ENCODE measurements at regions of chr7 and their contacts with region 1.

Region 1: DNA sequence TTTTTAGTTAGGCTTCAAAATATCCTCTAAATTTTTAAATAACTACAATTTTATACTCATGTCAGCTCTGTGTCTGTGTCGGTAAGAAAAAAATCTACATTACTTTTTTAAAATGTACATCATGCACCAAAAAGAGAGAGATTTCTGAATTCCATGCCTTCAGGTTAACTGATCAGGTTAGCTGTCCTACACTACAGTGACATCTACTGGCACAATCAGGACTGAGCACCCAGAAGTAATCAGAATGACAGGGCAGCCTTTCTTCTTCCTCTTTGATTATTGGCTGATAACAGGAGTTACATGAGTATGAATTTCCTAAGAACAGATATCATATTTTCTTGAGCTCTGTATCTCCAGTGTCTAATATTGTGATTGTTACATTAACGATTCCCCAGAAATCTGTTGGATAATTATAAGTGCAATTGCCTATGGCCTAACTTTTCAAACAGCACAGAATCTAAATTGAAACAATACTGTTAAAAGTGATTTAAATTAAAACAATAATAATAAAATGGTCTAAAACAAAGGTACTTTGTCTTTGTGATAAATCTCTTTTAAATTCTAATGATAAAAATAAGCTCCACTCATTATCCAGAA is 41.8 kb upstream of the HYCC1 start:
- DNase-seq: peak; percentile 46
- H3K4me3 Mint-ChIP-seq: no peak overlapping the region
- H3K27ac Mint-ChIP-seq: no peak overlapping the region
- H3K4me1 Mint-ChIP-seq: peaks cover 10% of the 10 kb centered on the region
- H3K27me3 Mint-ChIP-seq: peaks cover 3% of the 10 kb centered on the region

Region 2: GRCh38 chr7:22238354-22239311 is 817.0 kb before region 1 on chr7:
- intact Hi-C with region 1: no loop called
- DNase-seq: no peak
- H3K4me3 Mint-ChIP-seq: no peak overlapping the region
- H3K27ac Mint-ChIP-seq: no peak overlapping the region
- H3K4me1 Mint-ChIP-seq: no peaks in the 10 kb centered on the region
- H3K27me3 Mint-ChIP-seq: peaks cover 14% of the 10 kb centered on the region

Region 3: DNA sequence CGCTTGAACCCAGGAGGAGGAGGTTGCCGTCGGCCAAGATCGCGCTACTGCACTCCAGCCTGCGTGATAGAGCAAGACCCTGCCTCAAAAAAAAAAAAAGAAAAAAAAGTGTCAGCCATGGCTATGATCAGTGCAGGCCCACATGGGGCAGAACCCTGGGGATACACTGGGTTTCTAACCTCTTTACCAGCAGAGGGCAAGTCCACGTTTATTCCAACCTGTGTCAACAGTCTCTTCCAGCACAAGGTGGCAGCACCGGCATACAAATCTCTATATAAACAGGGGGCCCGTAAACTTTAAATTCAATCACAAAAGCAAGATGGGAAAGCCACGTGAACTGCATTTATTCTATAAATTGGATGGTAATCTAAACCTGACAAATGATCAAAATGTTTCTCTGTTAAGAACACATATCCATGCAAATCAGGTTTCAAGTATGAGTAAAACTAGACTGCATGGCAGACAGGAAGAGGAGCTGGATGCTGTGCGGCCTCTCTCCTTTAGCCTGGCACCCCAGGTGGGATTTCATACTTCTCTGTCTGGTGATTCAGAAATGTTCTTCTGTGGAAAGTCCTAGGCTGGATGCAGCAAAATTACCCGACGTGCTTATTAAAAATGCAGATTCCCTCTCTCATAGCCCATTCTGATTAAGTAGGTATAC is 495.7 kb before region 1 on chr7:
- intact Hi-C with region 1: loop called (anchors 1 kb)
- DNase-seq: peak; percentile 62
- H3K4me3 Mint-ChIP-seq: no peak overlapping the region
- H3K27ac Mint-ChIP-seq: no peak overlapping the region
- H3K4me1 Mint-ChIP-seq: peaks cover 44% of the 10 kb centered on the region
- H3K27me3 Mint-ChIP-seq: peaks cover 18% of the 10 kb centered on the region

Region 4: DNA sequence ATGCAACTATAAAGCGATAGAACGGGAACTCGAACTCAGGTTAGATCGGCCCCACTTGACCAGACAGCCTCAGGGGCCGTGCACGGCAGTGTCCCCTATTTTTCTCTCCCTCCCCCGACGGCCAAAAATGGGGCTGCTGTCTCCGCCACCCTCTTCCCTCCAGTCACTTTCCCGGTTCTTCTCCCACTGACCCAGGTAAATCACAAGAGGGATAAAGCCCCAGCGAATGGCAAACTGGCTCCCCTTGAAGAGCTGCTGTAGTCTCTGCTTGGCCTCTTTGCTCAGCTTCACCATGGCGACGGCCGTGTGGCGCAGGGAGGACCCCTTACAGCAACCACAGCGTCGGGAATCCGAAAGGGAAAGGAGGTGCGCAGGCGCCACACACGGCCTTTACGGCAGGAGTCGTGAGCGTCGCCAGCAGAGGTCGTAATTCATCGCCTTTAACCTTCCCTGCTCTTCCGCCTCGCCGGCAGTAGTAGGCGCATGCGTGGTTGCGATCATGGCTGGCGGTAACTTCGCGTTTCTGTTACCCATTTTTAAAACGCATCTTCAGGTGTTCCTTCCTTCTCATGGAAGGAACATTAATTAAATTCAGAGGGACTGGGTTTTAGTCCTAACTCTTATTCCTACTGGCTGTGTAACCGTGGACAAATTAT is 233.1 kb before region 1 on chr7 and contains the start of gene TOMM7:
- intact Hi-C with region 1: loop called (anchors 2 kb)
- DNase-seq: peak; percentile 84
- H3K4me3 Mint-ChIP-seq: peak within 1 kb of the TSS; percentile 97
- H3K27ac Mint-ChIP-seq: peak within 1 kb of the TSS; percentile 93
- H3K4me1 Mint-ChIP-seq: peaks cover 31% of the 10 kb centered on the region
- H3K27me3 Mint-ChIP-seq: peaks cover 14% of the 10 kb centered on the region
- total RNA-seq, gene TOMM7: 216 and 221 TPM in 2 replicates

Region 5: DNA sequence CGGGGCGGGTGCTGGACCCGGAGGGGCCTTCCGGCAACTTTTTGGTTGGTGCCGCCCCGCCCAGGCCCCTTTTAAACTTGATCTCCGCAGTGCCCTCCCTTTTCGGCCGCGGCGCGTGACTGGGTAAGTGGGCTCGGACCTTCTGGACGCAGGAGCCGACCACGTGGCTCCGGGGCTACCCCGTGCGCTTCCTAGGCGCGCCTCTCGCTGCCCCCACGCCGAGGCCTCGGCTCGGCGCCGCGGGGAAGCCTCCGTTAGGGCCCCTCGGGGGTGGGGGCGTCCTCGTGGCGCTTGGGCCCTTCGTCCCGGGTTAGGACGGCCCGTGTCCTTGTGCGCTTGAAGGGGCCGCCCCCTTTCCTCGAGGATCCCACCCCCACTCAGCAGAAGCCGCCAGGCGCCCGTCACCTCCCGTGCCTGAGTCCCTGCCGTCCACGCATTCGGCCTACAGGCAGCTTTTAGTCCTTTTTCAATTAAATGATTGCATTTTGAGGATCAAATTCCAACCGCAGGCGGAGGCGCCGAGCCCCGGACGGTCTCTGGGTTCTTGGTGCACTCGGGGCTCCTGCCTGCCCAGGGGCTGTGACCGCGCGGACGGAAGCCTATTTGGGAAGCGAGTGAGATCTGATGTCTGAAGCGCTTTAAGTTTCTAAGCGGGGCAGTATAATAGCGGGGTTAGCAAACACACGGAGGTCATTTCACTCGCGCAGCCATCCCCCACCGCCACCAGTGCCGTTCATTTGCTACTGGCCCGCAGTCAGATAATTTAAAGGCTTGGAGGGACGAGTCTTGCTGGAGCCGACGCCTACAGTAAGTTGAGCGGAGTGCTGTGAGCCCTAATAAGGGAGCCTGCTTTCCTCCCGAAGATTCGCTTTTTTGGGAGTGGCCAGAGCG is 201.3 kb before region 1 on chr7:
- intact Hi-C with region 1: loop called (anchors 1 kb)
- DNase-seq: peak; percentile 74
- H3K4me3 Mint-ChIP-seq: peak overlapping the region; percentile 95
- H3K27ac Mint-ChIP-seq: peak overlapping the region; percentile 94
- H3K4me1 Mint-ChIP-seq: peaks cover 31% of the 10 kb centered on the region
- H3K27me3 Mint-ChIP-seq: no peaks in the 10 kb centered on the region

Region 6: DNA sequence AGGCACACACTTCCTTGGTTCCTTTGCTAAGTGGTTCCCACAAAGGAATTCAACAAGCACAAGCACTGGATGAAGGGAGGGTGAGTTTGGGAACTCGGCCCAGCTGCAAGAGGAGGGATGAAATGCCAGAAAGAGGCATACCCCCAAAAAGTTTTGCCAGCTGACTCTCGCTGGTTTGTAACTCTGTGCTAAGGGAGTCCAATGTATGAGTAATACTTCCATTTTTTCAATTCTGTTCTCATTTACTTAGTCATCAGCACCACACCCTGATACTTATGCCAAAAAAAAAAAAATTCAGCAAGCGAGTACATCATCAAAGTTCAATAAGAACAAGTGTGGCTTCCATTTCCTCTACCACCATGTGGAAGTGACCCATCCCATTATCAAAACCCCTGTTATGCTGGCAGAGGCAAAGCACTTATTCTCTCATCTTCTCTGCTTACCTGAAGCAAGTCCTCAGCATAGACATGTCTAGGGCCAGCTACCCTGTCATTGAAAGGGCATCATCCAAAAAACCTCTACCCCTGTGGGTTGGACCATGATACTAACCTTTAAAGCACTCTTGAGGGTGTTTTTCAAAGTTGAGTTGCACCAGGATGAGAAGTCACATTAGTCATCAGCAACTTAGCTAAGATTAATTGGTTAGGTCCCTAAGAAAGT is 34.8 kb before region 1 on chr7:
- intact Hi-C with region 1: loop called (anchors 2 kb)
- DNase-seq: peak; percentile 24
- H3K4me3 Mint-ChIP-seq: peak overlapping the region; percentile 51
- H3K27ac Mint-ChIP-seq: peak overlapping the region; percentile 93
- H3K4me1 Mint-ChIP-seq: peaks cover 55% of the 10 kb centered on the region
- H3K27me3 Mint-ChIP-seq: peaks cover 4% of the 10 kb centered on the region

Measured in activated T-helper 2 cell treated with anti-CD3 and anti-CD28 coated beads, Interferon-gamma antibody, Interleukin-2, Interleukin-4, amounts not matched to agents 10 μg/mL and 5 μg/mL and 100 μg/mL, durations not matched to agents 14 hours and 24 hours and 36 hours (primary cell).